Caco-2 (cell line): ENCODE measurements at regions of chr1 and their contacts with region 1.

Region 1: DNA sequence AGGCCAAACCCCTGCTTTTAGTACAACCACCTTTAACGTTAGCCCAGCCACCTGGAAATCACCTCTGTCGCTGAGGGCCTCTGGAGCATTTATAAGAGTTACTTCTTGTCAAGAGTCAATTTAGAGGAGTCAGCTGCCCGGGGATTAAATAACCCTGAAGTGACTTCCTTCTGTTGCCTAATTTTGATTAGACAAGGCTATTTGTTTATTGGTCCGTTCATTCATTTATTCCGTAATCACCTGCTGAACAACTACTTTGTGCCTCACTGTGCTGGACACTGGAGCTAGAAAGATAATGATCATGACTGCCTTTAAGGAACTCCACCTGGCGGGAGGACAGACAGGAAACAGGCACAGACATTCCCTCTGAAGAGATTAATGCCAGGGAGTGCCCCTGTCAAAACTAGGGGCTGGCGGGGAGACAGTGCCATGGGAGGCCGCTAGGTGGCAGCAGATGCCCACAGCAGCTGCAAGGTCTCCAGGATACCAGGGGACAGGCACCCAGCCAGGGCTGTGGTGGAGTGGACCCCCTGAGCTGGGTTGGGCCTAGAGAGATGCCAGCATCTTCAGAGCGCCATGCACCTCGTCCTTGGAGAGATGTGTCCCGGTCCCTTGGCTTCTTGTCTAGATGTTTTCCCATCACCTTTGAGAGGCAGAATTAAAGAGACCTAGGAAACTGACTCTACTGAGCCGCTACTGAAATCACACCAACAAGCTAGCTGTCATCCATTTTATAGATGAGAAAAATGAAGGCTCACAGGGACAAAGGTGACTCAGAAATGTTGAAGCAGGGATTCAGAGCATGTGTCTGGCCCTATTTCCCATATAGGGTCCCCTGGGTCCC is 3.7 kb downstream of the REN start:
- DNase-seq: peak; percentile 82 to 90
- H3K4me3 ChIP-seq: no peak overlapping the region
- H3K4me3 Mint-ChIP-seq: no peak overlapping the region
- H3K27ac Mint-ChIP-seq: no peak overlapping the region
- H3K4me1 ChIP-seq: no peaks in the 10 kb centered on the region
- H3K4me1 Mint-ChIP-seq: no peaks in the 10 kb centered on the region
- H3K27me3 ChIP-seq: no peaks in the 10 kb centered on the region
- H3K27me3 Mint-ChIP-seq: no peaks in the 10 kb centered on the region
- CTCF ChIP-seq: peak; percentile 97

Region 2: DNA sequence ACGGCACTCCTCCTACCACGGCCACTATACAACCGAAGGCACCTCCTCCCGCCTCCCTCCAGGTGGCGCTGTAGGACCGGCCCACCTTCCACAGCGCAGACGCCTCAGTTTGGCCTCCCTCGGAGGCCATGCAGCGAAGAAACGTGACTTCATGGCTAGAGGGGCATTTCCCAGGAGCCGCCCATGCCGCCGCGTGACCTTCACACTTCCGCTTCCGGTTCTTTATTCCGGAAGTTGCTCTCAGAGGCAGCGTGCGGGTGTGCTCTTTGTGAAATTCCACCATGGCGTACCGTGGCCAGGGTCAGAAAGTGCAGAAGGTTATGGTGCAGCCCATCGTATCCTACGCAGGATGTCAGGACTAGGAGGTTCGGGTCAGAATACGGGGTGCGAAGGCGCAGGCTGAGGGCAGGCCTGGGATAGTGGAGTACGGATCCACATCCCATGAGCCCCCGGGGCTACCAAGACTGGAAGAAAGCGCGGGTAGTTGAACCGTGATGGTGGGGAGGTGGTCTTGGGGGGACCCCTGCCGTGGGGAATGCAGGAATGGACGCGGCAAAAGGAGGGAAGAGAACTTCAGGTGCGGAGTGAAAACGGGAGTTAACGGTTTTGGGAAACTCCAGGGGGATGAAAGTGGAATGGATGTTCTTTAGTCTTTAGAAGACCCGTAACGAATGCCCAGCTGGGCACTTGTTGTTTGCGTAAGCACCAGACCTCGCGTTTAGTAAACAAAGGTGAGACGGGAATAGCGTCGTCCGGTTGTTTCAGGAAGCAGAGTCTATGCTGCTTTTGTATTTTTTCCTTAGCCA is 300.9 kb before region 1 on chr1 and contains the start of gene SNRPE:
- CTCF ChIA-PET with region 1: no interaction called
- POLR2A ChIA-PET with region 1: no interaction called
- intact Hi-C with region 1: loop called (anchors 1 kb)
- DNase-seq: peak; percentile 97
- H3K4me3 ChIP-seq: peak within 1 kb of the TSS; percentile 89
- H3K4me3 Mint-ChIP-seq: peak within 1 kb of the TSS; percentile 93
- H3K27ac Mint-ChIP-seq: peak within 1 kb of the TSS; percentile 98
- H3K4me1 ChIP-seq: peaks cover 20% of the 10 kb centered on the region
- H3K4me1 Mint-ChIP-seq: peaks cover 6% of the 10 kb centered on the region
- H3K27me3 ChIP-seq: no peaks in the 10 kb centered on the region
- H3K27me3 Mint-ChIP-seq: no peaks in the 10 kb centered on the region
- CTCF ChIP-seq: peak; percentile 89 to 96
- total RNA-seq, gene SNRPE: 236 and 264 TPM in 2 replicates

Region 3: GRCh38 chr1:204151552-204152309 is 10.7 kb before region 1 on chr1 and contains the start of gene ETNK2:
- CTCF ChIA-PET with region 1: interaction called, 13 read pairs
- POLR2A ChIA-PET with region 1: interaction called, 4 read pairs
- intact Hi-C with region 1: no loop called
- DNase-seq: peak; percentile 76 to 84
- H3K4me3 ChIP-seq: peak within 1 kb of the TSS; percentile 59
- H3K4me3 Mint-ChIP-seq: peak within 1 kb of the TSS; percentile 71
- H3K27ac Mint-ChIP-seq: no peak within 1 kb of the TSS
- H3K4me1 ChIP-seq: peaks cover 6% of the 10 kb centered on the region
- H3K4me1 Mint-ChIP-seq: no peaks in the 10 kb centered on the region
- H3K27me3 ChIP-seq: no peaks in the 10 kb centered on the region
- H3K27me3 Mint-ChIP-seq: no peaks in the 10 kb centered on the region
- CTCF ChIP-seq: no peak
- total RNA-seq, gene ETNK2: 16.2 and 21.9 TPM in 2 replicates

Region 4: GRCh38 chr1:204207136-204207616 is 44.7 kb after region 1 on chr1:
- CTCF ChIA-PET with region 1: interaction called, 19 read pairs
- POLR2A ChIA-PET with region 1: no interaction called
- intact Hi-C with region 1: loop called (anchors 1 kb)
- DNase-seq: peak; percentile 63 to 80
- H3K4me3 ChIP-seq: no peak overlapping the region
- H3K4me3 Mint-ChIP-seq: no peak overlapping the region
- H3K27ac Mint-ChIP-seq: no peak overlapping the region
- H3K4me1 ChIP-seq: no peaks in the 10 kb centered on the region
- H3K4me1 Mint-ChIP-seq: peaks cover 7% of the 10 kb centered on the region
- H3K27me3 ChIP-seq: no peaks in the 10 kb centered on the region
- H3K27me3 Mint-ChIP-seq: no peaks in the 10 kb centered on the region
- CTCF ChIP-seq: peak; percentile 75 to 84

Region 5: DNA sequence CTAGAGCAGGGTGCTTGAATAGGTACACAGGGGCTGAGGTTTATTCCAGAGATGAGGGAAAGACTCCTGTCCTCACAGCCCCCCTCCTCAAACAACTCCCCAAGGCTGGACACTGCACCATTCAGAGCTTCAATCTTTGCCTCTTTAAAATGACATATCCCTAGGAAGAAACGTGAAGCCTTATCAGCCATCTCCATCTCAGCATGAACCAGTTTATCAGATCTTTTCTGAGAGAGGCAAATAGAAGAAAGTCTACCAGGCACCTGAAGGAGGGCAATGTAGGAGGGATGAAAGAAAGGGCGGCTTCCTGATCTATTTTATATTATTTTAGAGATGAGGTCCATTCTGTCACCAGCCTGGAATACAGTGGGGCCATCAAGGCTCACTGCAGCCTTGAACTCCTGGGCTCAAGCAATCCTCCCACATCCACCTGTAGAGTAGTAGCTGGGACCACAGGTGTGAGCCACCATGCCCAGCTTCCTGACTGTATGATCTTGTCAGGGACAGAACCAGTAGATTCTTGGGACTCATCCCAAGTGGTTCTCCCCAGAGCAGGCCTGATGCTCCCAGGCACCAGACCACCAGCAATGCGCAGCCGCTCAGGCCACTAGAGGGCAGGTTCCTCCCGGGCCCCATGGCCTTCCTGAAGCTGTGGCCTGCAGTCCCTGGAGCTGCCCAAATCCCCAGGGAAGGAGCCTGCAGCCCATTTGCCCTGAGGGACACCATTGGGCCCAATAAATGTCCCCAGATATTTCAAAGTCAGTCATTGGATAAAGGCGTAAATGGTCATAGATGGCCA is 95.7 kb after region 1 on chr1:
- CTCF ChIA-PET with region 1: interaction called, 7 read pairs
- POLR2A ChIA-PET with region 1: no interaction called
- intact Hi-C with region 1: loop called (anchors 2 kb)
- DNase-seq: peak; percentile 76 to 84
- H3K4me3 ChIP-seq: no peak overlapping the region
- H3K4me3 Mint-ChIP-seq: no peak overlapping the region
- H3K27ac Mint-ChIP-seq: no peak overlapping the region
- H3K4me1 ChIP-seq: peaks cover 8% of the 10 kb centered on the region; the same call in 1 of the 2 replicates
- H3K4me1 Mint-ChIP-seq: no peaks in the 10 kb centered on the region
- H3K27me3 ChIP-seq: no peaks in the 10 kb centered on the region
- H3K27me3 Mint-ChIP-seq: no peaks in the 10 kb centered on the region
- CTCF ChIP-seq: peak; percentile 86 to 92

Region 6: GRCh38 chr1:204398217-204399081 is 236.0 kb after region 1 on chr1:
- CTCF ChIA-PET with region 1: interaction called, 15 read pairs
- POLR2A ChIA-PET with region 1: no interaction called
- intact Hi-C with region 1: loop called (anchors 1 kb)
- DNase-seq: peak; percentile 88 to 91
- H3K4me3 ChIP-seq: no peak overlapping the region
- H3K4me3 Mint-ChIP-seq: no peak overlapping the region
- H3K27ac Mint-ChIP-seq: no peak overlapping the region
- H3K4me1 ChIP-seq: no peaks in the 10 kb centered on the region
- H3K4me1 Mint-ChIP-seq: peaks cover 10% of the 10 kb centered on the region
- H3K27me3 ChIP-seq: no peaks in the 10 kb centered on the region
- H3K27me3 Mint-ChIP-seq: no peaks in the 10 kb centered on the region
- CTCF ChIP-seq: peak; percentile 82 to 90